Endothelial cell of umbilical vein (primary cell): ENCODE measurements at regions of chr1 and their contacts with region 1.

Region 1: DNA sequence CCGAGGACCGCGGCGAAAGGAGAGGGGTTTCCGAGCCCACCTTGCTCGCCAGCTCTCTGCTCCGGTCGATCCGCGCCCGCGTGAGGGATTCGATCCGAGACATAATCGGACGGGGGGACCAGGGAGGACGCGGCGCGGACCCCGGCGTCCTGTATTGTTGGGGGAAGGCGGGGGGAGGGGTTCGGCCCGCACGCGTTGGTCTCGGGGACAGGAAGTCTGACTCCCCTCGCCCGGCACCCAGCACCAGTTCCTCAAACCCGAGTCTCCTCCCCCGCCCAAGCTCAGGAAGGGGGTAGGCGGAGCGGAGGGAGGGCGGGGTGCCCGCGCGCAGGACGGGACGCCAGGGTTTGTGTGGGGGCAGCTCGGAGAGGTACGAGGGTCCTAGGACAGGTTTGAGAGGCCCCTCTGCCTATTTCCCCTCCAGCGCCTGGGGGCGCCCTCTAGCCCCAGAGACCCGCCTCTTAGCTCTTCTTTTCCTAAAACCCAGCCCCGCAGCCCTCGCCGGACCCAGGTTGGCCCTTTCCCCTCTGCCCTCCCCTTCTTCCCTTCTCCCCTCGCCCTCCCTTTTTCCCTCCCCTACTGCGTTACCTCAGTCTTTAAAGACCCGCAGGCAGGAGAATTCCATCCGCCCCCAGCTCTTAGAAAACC is at the start of gene ARHGEF2:
- DNase-seq: peak; percentile 50
- H3K4me3 ChIP-seq: peak within 1 kb of the TSS; percentile 43 to 80 (median 76)
- H3K27ac ChIP-seq: peak within 1 kb of the TSS; percentile 55
- H3K4me1 ChIP-seq: peaks cover 68% of the 10 kb centered on the region
- H3K27me3 ChIP-seq: no peaks in the 10 kb centered on the region
- CTCF ChIP-seq: peak in 1 of 2 donors; percentile 44
- POLR2A ChIP-seq: peak; percentile 72
- total RNA-seq, gene ARHGEF2: 110 and 118 TPM in 2 replicates

Region 2: GRCh38 chr1:155940531-155940992 is 37.9 kb before region 1 on chr1:
- CTCF ChIA-PET with region 1: interaction called, 20 read pairs
- POLR2A ChIA-PET with region 1: interaction called, 4 read pairs
- dilution Hi-C with region 1: no loop called
- intact Hi-C with region 1: no loop called
- DNase-seq: peak; percentile 84
- H3K4me3 ChIP-seq: peak overlapping the region in 1 of 3 experiments; percentile 21
- H3K27ac ChIP-seq: peak overlapping the region; percentile 90
- H3K4me1 ChIP-seq: peaks cover 28% of the 10 kb centered on the region
- H3K27me3 ChIP-seq: no peaks in the 10 kb centered on the region
- CTCF ChIP-seq: no peak
- POLR2A ChIP-seq: peak; percentile 87

Region 3: DNA sequence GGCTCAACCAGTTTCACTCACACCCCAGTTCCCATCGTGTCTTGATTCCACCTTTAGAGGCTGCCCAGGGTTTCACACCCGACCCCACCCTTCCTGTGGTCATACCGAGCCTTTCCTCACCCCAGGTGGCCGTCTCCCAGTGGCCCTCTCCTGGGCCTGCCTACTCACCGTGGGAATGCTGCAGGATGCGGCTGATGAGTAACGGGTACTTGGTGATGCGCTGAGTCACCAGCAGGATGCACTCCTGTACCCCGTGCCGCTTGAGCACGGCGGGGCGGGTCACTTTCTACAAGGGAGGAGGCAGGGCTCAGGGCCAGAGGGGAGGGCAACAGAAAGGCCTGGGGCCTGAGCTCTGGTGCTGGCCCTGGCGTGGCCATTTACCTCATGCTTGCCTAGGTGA is 16.5 kb before region 1 on chr1:
- CTCF ChIA-PET with region 1: interaction called, 138 read pairs
- POLR2A ChIA-PET with region 1: interaction called, 7 read pairs
- dilution Hi-C with region 1: no loop called
- intact Hi-C with region 1: loop called (anchors 1 kb)
- DNase-seq: peak; percentile 91
- H3K4me3 ChIP-seq: no peak overlapping the region
- H3K27ac ChIP-seq: peak overlapping the region; percentile 86
- H3K4me1 ChIP-seq: peaks cover 22% of the 10 kb centered on the region
- H3K27me3 ChIP-seq: no peaks in the 10 kb centered on the region
- CTCF ChIP-seq: peak; percentile 44 to 61
- POLR2A ChIP-seq: peak; percentile 7

Region 4: GRCh38 chr1:156012051-156012817 is 33.8 kb after region 1 on chr1:
- CTCF ChIA-PET with region 1: no interaction called
- POLR2A ChIA-PET with region 1: no interaction called
- dilution Hi-C with region 1: no loop called
- intact Hi-C with region 1: no loop called
- DNase-seq: no peak
- H3K4me3 ChIP-seq: no peak overlapping the region
- H3K27ac ChIP-seq: no peak overlapping the region
- H3K4me1 ChIP-seq: no peaks in the 10 kb centered on the region
- H3K27me3 ChIP-seq: no peaks in the 10 kb centered on the region
- CTCF ChIP-seq: no peak
- POLR2A ChIP-seq: no peak